ENCODE measurements at regions of chr6 and their contacts with region 1.

Region 1: GRCh38 chr6:10429638-10430427 is 15.0 kb upstream of the TFAP2A start:
- DNase-seq: no peak
- ATAC-seq: peak; percentile 33
- H3K4me3 Mint-ChIP-seq: no peak overlapping the region
- H3K27ac Mint-ChIP-seq: no peak overlapping the region
- H3K4me1 Mint-ChIP-seq: peaks cover 29% of the 10 kb centered on the region
- H3K27me3 Mint-ChIP-seq: peaks cover 45% of the 10 kb centered on the region

Region 2: DNA sequence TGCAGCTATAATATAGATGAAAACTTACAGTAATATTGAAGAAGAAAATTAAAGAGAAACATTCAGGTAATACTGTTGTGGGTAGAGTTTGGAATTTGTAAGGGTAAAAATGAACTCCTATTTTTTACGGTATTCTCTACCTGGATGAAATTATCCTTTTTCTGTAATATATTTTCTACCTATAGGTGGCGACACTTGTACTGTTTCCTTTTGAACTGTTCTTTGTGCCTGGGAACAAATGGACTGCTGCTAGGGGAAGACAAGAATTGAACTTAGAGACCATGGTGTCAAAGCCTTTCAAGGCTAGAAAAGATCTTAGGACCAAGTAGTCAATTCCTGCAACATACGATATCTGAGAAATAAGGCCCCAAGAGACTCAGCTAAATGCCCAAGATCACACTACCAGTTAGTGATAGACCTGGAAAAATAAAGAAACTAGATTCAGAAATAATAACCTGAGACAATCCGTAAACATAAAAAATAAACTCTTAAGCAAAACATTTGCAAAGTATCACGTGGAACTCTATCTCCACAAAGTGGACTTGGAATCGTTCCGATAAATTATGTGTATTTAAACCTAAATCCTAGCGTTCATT is 398.8 kb before region 1 on chr6:
- CTCF ChIA-PET with region 1: interaction called, 13 read pairs
- POLR2A ChIA-PET with region 1: no interaction called
- DNase-seq: no peak
- ATAC-seq: no peak
- H3K4me3 Mint-ChIP-seq: no peak overlapping the region
- H3K27ac Mint-ChIP-seq: no peak overlapping the region
- H3K4me1 Mint-ChIP-seq: no peaks in the 10 kb centered on the region
- H3K27me3 Mint-ChIP-seq: no peaks in the 10 kb centered on the region

Region 3: GRCh38 chr6:10486215-10486614 is 56.4 kb after region 1 on chr6:
- CTCF ChIA-PET with region 1: no interaction called
- POLR2A ChIA-PET with region 1: no interaction called
- DNase-seq: no peak
- ATAC-seq: no peak
- H3K4me3 Mint-ChIP-seq: no peak overlapping the region
- H3K27ac Mint-ChIP-seq: no peak overlapping the region
- H3K4me1 Mint-ChIP-seq: no peaks in the 10 kb centered on the region
- H3K27me3 Mint-ChIP-seq: peaks cover 4% of the 10 kb centered on the region

Region 4: GRCh38 chr6:10505529-10505928 is 75.7 kb after region 1 on chr6:
- CTCF ChIA-PET with region 1: no interaction called
- POLR2A ChIA-PET with region 1: no interaction called
- DNase-seq: no peak
- ATAC-seq: no peak
- H3K4me3 Mint-ChIP-seq: no peak overlapping the region
- H3K27ac Mint-ChIP-seq: no peak overlapping the region
- H3K4me1 Mint-ChIP-seq: peaks cover 2% of the 10 kb centered on the region
- H3K27me3 Mint-ChIP-seq: peaks cover 22% of the 10 kb centered on the region